AG04450 (cell line): ENCODE measurements at regions of chr12 and their contacts with region 1.

Region 1: DNA sequence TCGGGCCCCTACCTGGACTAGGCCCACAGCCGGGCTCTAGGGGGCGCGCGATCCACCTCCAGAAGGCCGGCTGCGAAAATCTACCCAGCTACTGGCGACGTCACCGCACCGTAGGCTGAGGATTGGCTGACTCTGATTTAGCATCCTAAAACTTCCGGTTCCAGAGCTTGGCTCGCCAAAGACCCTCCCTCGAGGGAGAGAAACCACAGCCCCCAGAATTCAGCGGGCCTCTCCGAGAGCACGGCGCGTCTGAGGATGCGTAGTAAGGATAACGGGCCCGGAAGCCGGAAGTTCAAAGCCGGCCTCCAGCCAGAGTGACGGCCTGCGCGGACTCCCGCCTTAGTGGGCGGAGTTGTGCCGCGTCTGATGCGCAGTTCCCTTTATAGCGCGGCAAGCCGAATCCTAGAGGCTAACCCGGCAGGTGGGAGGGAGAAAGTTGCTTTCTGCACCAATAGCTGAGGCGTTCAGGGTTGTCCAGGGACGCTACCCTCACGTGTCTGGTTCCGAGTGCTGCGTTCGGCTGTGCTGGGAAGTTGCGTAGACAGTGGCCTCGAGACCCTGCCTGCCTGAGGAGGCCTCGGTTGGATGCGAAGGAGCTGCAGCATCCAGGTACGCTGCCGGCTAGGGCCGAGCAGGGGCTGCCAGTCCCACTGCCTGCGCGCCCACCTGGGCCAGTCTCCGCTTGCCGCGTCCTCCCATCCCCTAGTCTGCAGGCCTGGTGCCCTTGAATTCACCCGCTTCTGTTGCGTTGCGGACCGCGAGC is at the start of gene COX14:
- DNase-seq: peak; percentile 99
- H3K4me3 ChIP-seq: peak within 1 kb of the TSS; percentile 99
- H3K27ac ChIP-seq: peak within 1 kb of the TSS; percentile 96
- H3K27me3 ChIP-seq: no peaks in the 10 kb centered on the region
- CTCF ChIP-seq: peak; percentile 92
- polyA plus RNA-seq, gene COX14: 77.0 and 90.6 TPM in 2 replicates

Region 2: DNA sequence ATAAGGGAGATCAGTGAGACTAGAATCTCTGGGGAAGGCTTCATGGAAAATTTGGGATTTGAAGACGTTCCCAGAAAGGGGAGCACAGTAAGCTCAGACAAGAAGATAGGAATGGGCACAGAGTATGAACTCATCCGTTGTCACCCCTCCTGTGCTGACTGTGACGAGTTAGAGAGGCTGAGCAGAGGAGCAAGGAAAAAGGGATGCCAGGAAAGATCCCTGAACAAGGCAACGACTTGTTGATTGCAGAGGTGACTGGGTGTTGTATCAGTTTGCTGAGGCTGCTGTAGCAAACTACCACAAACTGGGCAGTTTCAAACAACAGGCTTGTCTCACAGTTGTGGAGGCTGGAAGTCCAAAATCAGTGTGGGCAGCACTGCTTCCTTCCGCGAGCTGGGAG is 13.9 kb before region 1 on chr12:
- CTCF ChIA-PET with region 1: interaction called, 46 read pairs
- POLR2A ChIA-PET with region 1: interaction called, 4 read pairs
- DNase-seq: no peak
- H3K4me3 ChIP-seq: no peak overlapping the region
- H3K27ac ChIP-seq: no peak overlapping the region
- H3K27me3 ChIP-seq: no peaks in the 10 kb centered on the region
- CTCF ChIP-seq: no peak

Region 3: GRCh38 chr12:50142993-50143392 is 31.1 kb after region 1 on chr12:
- CTCF ChIA-PET with region 1: interaction called, 13 read pairs
- POLR2A ChIA-PET with region 1: no interaction called
- DNase-seq: no peak
- H3K4me3 ChIP-seq: no peak overlapping the region
- H3K27ac ChIP-seq: no peak overlapping the region
- H3K27me3 ChIP-seq: no peaks in the 10 kb centered on the region
- CTCF ChIP-seq: no peak

Region 4: DNA sequence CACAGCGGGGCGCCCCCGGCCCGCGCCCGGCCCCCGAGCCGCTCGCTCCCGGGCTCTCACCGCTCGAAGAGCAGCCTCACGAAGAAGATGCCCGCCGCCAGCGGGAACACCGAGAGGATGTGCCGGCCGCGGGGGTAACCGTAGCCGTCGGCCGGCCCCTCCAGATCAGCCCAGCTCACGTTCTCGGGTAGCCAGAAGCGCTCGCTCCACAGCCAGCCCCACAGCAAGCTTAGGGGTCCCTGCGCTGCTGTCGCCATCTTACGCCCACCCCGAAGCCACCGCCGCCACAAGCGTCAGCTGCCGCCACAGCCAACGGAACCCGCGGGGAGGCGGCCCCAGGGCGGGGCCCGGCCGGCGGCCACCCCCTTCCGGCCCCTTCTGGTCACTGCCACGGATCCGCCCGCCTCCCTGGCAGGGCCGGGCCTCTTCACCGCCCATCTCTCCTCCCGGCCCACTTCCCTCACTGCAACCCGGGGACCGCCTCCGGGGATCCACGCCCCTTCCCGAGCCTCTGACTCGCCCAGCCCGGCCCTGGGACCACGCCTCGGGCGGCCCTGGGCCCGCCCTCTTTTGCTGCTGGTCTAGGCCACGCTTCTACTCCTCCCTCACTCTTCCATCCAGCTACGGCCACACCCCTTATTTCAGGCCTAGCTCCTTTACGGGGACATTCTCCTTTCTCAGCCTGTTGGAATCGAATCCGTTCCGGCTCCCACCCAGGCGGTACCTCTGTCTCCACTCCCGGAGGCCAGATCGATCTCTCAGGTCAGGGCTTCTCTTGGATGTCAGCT is 55.4 kb after region 1 on chr12 and contains the start of gene CERS5:
- CTCF ChIA-PET with region 1: interaction called, 17 read pairs
- POLR2A ChIA-PET with region 1: interaction called, 33 read pairs
- DNase-seq: peak; percentile 96
- H3K4me3 ChIP-seq: peak within 1 kb of the TSS; percentile 87
- H3K27ac ChIP-seq: peak within 1 kb of the TSS; percentile 89
- H3K27me3 ChIP-seq: no peaks in the 10 kb centered on the region
- CTCF ChIP-seq: no peak
- polyA plus RNA-seq, gene CERS5: 76.1 and 83.3 TPM in 2 replicates